ENCODE measurements at regions of chr3 and their contacts with region 1.

Region 1: DNA sequence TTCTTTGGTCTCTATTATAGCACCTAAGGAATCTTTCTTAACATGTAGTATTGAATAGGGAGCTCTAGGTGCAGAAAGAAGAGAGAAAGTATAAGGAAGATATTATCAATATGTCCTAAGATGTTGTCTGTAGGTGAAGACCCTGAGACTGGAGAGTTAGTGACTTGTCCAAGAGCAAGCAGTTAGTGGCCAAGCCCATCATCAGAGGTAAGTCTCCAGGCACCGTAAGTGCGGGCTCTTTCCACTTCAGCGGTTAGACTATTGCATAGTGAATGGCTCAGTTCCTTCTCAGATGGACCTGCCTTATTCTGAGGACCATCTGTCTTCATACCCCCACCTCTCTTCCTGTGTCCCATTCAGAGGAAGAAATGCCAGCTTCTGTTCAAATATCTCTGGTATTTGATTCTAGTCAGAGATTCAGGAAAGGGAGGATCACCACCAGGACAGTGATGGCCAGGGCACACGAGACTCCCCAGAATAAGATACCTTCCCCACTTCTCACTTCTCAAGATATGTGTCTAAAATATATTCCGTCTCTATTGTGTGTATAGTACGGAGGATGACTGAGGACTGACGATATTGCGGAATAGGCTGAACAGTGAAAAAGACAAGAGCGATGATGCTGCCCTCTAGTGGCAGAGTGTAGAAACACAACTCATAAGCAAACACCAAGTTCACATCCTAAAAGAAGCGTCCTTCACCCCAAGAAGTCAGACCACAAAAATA is 19.1 kb upstream of the ADGRG7 start:
- DNase-seq: peak; percentile 63
- ATAC-seq: peak; percentile 91
- H3K4me3 ChIP-seq: peak overlapping the region; percentile 16 to 42; a peak in 3 of 4 replicates
- H3K27ac ChIP-seq: no peak overlapping the region
- H3K4me1 ChIP-seq: peaks cover 0 to 5% of the 10 kb centered on the region in 2 experiments; a peak in 1 of 4 replicates
- H3K27me3 ChIP-seq: no peaks in the 10 kb centered on the region
- CTCF ChIP-seq: peak; percentile 75 to 89 (median 76)
- POLR2A ChIP-seq: no peak
- RAD21 ChIP-seq: peak; percentile 87

Region 2: DNA sequence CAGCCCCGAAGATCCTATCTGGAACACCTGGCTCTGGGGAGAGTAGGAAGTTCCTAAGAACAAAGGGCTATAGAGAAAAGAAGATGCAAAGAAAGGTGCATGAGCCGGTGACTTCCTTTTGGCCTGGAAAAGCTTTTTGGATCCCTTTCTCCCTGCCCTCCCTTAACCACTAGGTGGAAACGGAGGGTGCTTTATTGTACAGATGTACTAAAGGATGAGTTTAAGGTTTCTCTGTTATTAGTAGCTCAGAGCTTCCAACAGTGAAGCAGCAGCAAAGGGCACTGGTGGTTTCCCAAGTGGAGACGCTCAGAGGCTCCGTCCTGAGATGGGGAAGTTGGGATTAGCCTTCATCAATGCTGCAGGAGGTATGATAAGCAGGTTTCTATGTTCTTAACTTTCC is 13.2 kb after region 1 on chr3:
- CTCF ChIA-PET with region 1: interaction called, 13 read pairs
- POLR2A ChIA-PET with region 1: no interaction called
- RAD21 ChIA-PET with region 1: interaction called in 1 of 2 experiments, 5 read pairs
- intact Hi-C with region 1: no loop called
- DNase-seq: peak; percentile 41
- ATAC-seq: peak; percentile 94
- H3K4me3 ChIP-seq: no peak overlapping the region
- H3K27ac ChIP-seq: no peak overlapping the region
- H3K4me1 ChIP-seq: peaks cover 3 to 19% of the 10 kb centered on the region in 2 experiments; a peak in 3 of 4 replicates
- H3K27me3 ChIP-seq: no peaks in the 10 kb centered on the region
- CTCF ChIP-seq: peak; percentile 53 to 71 (median 66); a peak in 5 of 6 replicates
- POLR2A ChIP-seq: no peak
- RAD21 ChIP-seq: peak; percentile 65